ENCODE measurements at regions of chr5 and their contacts with region 1.

Region 1: GRCh38 chr5:38441453-38442246 is 114.8 kb downstream of the LIFR start:
- DNase-seq: peak; percentile 58 to 75 (median 72)
- H3K4me3 ChIP-seq: no peak overlapping the region
- H3K4me3 Mint-ChIP-seq: peak overlapping the region in 1 of 2 donors; percentile 78
- H3K27ac ChIP-seq: no peak overlapping the region
- H3K27ac Mint-ChIP-seq: no peak overlapping the region
- H3K4me1 ChIP-seq: no peaks in the 10 kb centered on the region
- H3K4me1 Mint-ChIP-seq: no peaks in the 10 kb centered on the region
- H3K27me3 ChIP-seq: peaks cover 75 to 93% of the 10 kb centered on the region in 2 donors
- H3K27me3 Mint-ChIP-seq: peaks cover 83 to 90% (median 87%) of the 10 kb centered on the region in 3 donors
- CTCF ChIP-seq: peak; percentile 92

Region 2: GRCh38 chr5:38622723-38623129 is 181.1 kb after region 1 on chr5:
- intact Hi-C with region 1: no loop called
- DNase-seq: no peak
- H3K4me3 ChIP-seq: no peak overlapping the region
- H3K4me3 Mint-ChIP-seq: no peak overlapping the region
- H3K27ac ChIP-seq: no peak overlapping the region
- H3K27ac Mint-ChIP-seq: no peak overlapping the region
- H3K4me1 ChIP-seq: no peaks in the 10 kb centered on the region
- H3K4me1 Mint-ChIP-seq: no peaks in the 10 kb centered on the region
- H3K27me3 ChIP-seq: peaks cover 0 to 2% of the 10 kb centered on the region in 2 donors
- H3K27me3 Mint-ChIP-seq: peaks cover 0 to 2% (median 2%) of the 10 kb centered on the region in 3 donors
- CTCF ChIP-seq: no peak

Region 3: GRCh38 chr5:38666668-38667498 is 225.2 kb after region 1 on chr5:
- intact Hi-C with region 1: loop called in 1 of 2 experiments (anchors 10 kb)
- DNase-seq: no peak
- H3K4me3 ChIP-seq: no peak overlapping the region
- H3K4me3 Mint-ChIP-seq: no peak overlapping the region
- H3K27ac ChIP-seq: no peak overlapping the region
- H3K27ac Mint-ChIP-seq: no peak overlapping the region
- H3K4me1 ChIP-seq: no peaks in the 10 kb centered on the region
- H3K4me1 Mint-ChIP-seq: no peaks in the 10 kb centered on the region
- H3K27me3 ChIP-seq: peaks cover 2 to 19% of the 10 kb centered on the region in 2 donors
- H3K27me3 Mint-ChIP-seq: peaks cover 14 to 28% (median 21%) of the 10 kb centered on the region in 3 donors
- CTCF ChIP-seq: no peak

Region 4: DNA sequence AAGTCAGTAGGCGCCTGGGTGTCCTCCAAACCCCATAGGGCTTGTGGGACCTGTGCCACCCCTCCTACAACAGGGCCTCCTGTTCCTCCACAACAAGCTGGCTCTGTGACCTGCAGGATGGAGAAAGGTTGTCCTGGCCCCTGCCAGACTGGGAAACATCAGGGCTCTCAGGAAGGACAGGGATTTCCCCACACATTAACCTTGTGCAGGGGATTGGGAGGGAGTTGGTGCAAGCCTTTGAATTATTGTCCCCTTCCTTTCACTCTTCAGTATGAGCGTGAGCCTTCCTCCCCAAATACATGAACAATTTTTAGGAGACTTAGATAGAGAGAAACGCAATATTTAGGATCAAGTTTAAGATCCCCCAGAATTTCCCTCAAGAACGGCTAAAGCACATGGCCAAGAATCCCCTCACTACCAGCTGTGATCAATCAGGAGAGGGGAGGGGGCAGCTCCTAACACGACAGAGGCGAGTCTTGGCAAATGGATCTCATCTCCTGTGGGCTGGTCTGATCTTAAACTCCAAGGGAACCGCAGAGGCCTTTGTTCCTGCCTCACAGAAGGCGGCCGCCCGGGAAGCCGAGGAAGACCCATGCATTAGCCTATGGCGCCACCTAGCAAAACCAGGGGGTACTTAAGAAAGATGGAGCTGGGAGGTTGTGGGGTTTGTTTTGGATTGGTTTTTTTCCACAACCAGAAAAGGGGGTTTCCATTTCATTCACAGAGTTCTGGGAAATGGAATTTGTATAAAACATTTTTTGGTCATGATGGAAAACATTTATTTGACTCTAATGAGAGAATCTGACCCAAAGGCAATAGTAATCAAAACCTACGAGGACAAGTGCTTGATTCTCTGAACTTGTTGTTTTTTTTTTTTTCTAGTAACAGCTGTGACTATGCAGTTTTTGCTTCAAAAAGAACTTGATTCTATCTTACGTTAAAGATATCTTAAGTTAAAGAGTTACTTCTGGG is 368.0 kb after region 1 on chr5:
- intact Hi-C with region 1: loop called in 1 of 2 experiments (anchors 10 kb)
- DNase-seq: peak in 2 of 3 donors; percentile 2 to 32
- H3K4me3 ChIP-seq: no peak overlapping the region
- H3K4me3 Mint-ChIP-seq: peak overlapping the region; percentile 20 to 52
- H3K27ac ChIP-seq: no peak overlapping the region
- H3K27ac Mint-ChIP-seq: no peak overlapping the region
- H3K4me1 ChIP-seq: no peaks in the 10 kb centered on the region
- H3K4me1 Mint-ChIP-seq: no peaks in the 10 kb centered on the region
- H3K27me3 ChIP-seq: peaks cover 2 to 49% of the 10 kb centered on the region in 2 donors
- H3K27me3 Mint-ChIP-seq: peaks cover 21 to 54% (median 38%) of the 10 kb centered on the region in 3 donors
- CTCF ChIP-seq: peak; percentile 60

Region 5: GRCh38 chr5:38878391-38879077 is 436.9 kb after region 1 on chr5:
- intact Hi-C with region 1: no loop called
- DNase-seq: no peak
- H3K4me3 ChIP-seq: no peak overlapping the region
- H3K4me3 Mint-ChIP-seq: no peak overlapping the region
- H3K27ac ChIP-seq: no peak overlapping the region
- H3K27ac Mint-ChIP-seq: no peak overlapping the region
- H3K4me1 ChIP-seq: no peaks in the 10 kb centered on the region
- H3K4me1 Mint-ChIP-seq: no peaks in the 10 kb centered on the region
- H3K27me3 ChIP-seq: peaks cover 9 to 18% of the 10 kb centered on the region in 2 donors
- H3K27me3 Mint-ChIP-seq: peaks cover 14 to 54% (median 20%) of the 10 kb centered on the region in 3 donors
- CTCF ChIP-seq: no peak

Region 6: DNA sequence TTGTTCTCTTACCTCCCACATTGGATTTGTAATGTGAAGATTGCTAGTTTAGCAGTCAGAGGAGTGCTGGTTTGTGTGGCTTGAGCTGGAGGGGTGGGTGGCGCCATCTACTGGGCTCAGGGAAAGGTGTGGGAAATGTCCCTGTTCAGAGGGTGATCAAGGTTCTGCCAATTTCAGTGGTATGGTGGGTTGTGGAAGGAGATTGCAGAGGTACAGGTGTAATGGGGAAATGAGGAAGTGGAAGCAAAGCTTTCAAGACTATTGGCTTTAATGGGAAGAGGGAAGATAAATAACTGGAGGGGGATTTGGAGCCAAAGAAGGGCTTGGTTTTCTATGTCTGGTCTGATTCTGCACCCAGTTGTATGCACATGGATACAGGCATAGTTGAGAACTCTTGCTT is 480.5 kb after region 1 on chr5:
- intact Hi-C with region 1: loop called in 1 of 2 experiments (anchors 10 kb)
- DNase-seq: peak in 2 of 3 donors; percentile 1 to 14
- H3K4me3 ChIP-seq: no peak overlapping the region
- H3K4me3 Mint-ChIP-seq: no peak overlapping the region
- H3K27ac ChIP-seq: no peak overlapping the region
- H3K27ac Mint-ChIP-seq: no peak overlapping the region
- H3K4me1 ChIP-seq: no peaks in the 10 kb centered on the region
- H3K4me1 Mint-ChIP-seq: no peaks in the 10 kb centered on the region
- H3K27me3 ChIP-seq: peaks cover 28 to 31% of the 10 kb centered on the region in 2 donors
- H3K27me3 Mint-ChIP-seq: peaks cover 16 to 43% (median 21%) of the 10 kb centered on the region in 3 donors
- CTCF ChIP-seq: peak; percentile 80

Measured in CD14-positive monocyte (primary cell).